Activated CD4-positive, alpha-beta memory T cell treated with anti-CD3 and anti-CD28 coated beads for 36 hours (primary cell): ENCODE measurements at regions of chr20 and their contacts with region 1.

Region 1: GRCh38 chr20:53578492-53579222 is 15.0 kb downstream of the ZNF217 start:
- DNase-seq: peak; percentile 48
- H3K4me3 Mint-ChIP-seq: peak overlapping the region; percentile 82
- H3K27ac Mint-ChIP-seq: peak overlapping the region; percentile 97
- H3K4me1 Mint-ChIP-seq: peaks cover 85% of the 10 kb centered on the region
- H3K27me3 Mint-ChIP-seq: no peaks in the 10 kb centered on the region

Region 2: DNA sequence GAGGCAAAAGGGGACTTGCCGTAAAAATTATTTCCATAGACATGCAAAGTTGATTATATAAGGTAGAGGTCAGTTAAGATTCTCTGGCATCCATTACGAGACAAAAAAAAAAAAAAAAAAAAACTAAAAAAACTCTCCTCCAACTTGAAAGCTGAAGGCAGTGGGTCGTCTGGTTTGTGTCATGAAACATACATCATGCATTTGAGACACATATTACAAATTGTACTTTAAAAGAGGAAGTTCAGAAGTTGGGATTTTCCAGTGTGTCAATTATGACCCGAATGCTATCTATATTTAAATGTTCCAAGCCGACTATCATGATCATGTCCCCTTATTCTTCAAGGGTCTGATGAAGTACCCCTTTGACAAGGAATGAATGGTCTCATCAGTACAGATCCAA is 110.1 kb before region 1 on chr20:
- CTCF ChIA-PET with region 1: no interaction called
- POLR2A ChIA-PET with region 1: no interaction called
- intact Hi-C with region 1: no loop called
- DNase-seq: no peak
- H3K4me3 Mint-ChIP-seq: no peak overlapping the region
- H3K27ac Mint-ChIP-seq: no peak overlapping the region
- H3K4me1 Mint-ChIP-seq: no peaks in the 10 kb centered on the region
- H3K27me3 Mint-ChIP-seq: peaks cover 3% of the 10 kb centered on the region

Region 3: GRCh38 chr20:53594068-53595017 is 15.7 kb after region 1 on chr20:
- CTCF ChIA-PET with region 1: interaction called, 6 read pairs
- POLR2A ChIA-PET with region 1: interaction called, 17 read pairs
- intact Hi-C with region 1: loop called (anchors 1 kb)
- DNase-seq: peak; percentile 96
- H3K4me3 Mint-ChIP-seq: peak overlapping the region; percentile 96
- H3K27ac Mint-ChIP-seq: peak overlapping the region; percentile 94
- H3K4me1 Mint-ChIP-seq: peaks cover 46% of the 10 kb centered on the region
- H3K27me3 Mint-ChIP-seq: no peaks in the 10 kb centered on the region

Region 4: GRCh38 chr20:53643031-53643832 is 64.6 kb after region 1 on chr20:
- CTCF ChIA-PET with region 1: interaction called, 3 read pairs
- POLR2A ChIA-PET with region 1: interaction called, 7 read pairs
- intact Hi-C with region 1: loop called (anchors 2 kb)
- DNase-seq: peak; percentile 76
- H3K4me3 Mint-ChIP-seq: peak overlapping the region; percentile 68
- H3K27ac Mint-ChIP-seq: peak overlapping the region; percentile 88
- H3K4me1 Mint-ChIP-seq: peaks cover 28% of the 10 kb centered on the region
- H3K27me3 Mint-ChIP-seq: no peaks in the 10 kb centered on the region

Region 5: DNA sequence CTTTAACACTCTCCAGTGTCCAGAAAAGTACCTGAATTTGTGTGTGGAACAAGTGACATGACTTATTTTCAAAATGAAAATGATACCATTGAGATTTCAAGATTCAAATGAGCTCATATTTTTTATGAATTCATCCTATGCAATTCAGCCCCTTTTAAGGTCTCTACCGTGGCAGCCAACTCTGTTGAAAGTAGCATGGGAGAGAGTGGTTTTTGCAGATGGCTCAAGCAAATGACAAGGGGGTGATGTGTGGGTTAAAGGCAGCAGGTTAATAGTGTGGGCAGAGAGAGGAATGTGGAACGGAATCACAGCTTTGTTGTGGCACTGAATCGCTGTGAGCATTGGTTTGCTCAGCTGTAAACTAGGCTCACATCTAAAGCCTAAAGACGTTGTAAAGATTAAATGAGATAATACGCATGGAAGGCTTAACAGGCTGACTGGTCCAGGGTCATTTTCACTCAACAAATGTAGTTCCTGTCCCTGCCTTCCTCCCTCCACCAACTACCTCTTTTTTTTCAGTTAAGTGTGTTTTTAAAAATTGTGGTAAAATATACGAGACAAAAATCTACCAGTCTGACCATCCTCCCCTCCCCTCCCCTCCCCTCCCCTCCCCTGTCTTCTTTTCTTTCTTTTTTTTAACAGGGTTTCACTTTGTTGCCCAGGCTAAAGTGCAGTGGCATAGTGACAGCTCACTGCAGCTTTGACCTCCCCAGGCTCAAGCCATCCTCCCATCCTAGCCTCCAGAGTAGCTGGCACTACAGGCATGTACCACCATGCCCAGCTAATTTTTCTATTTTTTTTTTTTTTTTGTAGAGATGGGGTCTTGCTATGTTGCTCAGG is 129.7 kb after region 1 on chr20:
- CTCF ChIA-PET with region 1: interaction called, 7 read pairs
- POLR2A ChIA-PET with region 1: interaction called, 5 read pairs
- intact Hi-C with region 1: loop called (anchors 1 kb)
- DNase-seq: peak; percentile 62
- H3K4me3 Mint-ChIP-seq: peak overlapping the region; percentile 63
- H3K27ac Mint-ChIP-seq: peak overlapping the region; percentile 94
- H3K4me1 Mint-ChIP-seq: peaks cover 39% of the 10 kb centered on the region
- H3K27me3 Mint-ChIP-seq: no peaks in the 10 kb centered on the region

Region 6: DNA sequence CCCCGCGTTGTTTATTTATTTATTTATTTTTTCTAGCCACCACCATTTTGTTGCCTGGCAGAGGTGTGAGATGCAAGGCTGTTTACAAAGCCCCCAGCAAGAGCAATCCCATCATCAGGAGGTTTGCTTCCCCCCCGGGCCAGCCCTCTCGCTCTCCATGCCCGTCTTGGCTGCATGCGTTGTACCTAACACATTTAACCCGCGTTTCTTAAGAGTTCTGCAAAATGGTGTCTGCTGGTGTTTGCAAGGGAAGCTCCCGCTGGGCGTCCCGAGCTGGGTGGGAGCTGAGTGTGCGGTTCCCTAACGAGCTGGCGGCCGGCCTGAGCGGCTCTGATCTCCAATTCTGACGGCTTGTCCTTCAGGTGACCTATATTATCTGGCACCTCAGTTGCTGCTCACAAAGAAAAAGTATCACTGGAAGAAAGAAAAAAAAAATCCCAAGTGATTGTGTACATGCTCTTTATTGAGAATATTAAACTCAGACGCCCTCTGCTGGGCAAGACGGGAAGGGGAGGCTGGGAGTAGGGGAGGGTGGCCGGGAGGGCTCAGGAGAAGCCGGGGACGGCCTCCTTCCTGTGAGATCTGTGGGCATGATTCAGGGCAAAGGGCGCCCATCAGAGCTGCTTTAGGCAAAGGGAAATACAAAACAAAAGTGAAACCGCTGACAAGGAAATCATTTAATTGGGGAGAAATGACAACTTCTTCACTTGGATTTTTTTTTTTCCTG is 337.0 kb after region 1 on chr20:
- CTCF ChIA-PET with region 1: interaction called, 81 read pairs
- POLR2A ChIA-PET with region 1: no interaction called
- intact Hi-C with region 1: loop called (anchors 1 kb)
- DNase-seq: peak; percentile 98
- H3K4me3 Mint-ChIP-seq: peak overlapping the region; percentile 91
- H3K27ac Mint-ChIP-seq: peak overlapping the region; percentile 82
- H3K4me1 Mint-ChIP-seq: peaks cover 40% of the 10 kb centered on the region
- H3K27me3 Mint-ChIP-seq: no peaks in the 10 kb centered on the region

Region 7: DNA sequence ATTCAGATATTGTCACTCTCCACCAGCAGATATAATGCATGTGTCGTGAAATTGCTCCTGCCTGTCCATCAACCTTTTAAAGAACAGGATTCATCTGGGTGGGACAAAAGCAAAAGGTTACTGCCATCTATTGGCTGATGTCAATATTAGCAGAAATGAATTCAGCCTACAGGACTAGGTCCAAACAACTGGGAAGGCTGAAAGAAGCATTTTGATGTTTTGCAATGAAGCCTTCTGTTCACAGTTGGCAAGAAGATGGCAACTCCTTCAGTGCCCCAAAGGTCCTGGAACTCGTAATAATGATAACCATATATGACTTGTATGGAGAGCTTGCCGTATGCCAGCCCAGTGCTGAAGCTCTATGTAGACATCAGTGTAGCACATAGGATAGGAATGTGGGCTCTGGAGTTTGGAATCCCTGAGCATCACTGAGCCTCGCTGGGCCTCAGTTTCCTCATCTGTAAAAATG is 484.2 kb after region 1 on chr20:
- CTCF ChIA-PET with region 1: interaction called, 3 read pairs
- POLR2A ChIA-PET with region 1: no interaction called
- intact Hi-C with region 1: loop called (anchors 5 kb)
- DNase-seq: no peak
- H3K4me3 Mint-ChIP-seq: no peak overlapping the region
- H3K27ac Mint-ChIP-seq: no peak overlapping the region
- H3K4me1 Mint-ChIP-seq: peaks cover 13% of the 10 kb centered on the region
- H3K27me3 Mint-ChIP-seq: peaks cover 3% of the 10 kb centered on the region